Right ventricle myocardium inferior (tissue), 1 donor: ENCODE measurements at regions of chr15 and their contacts with region 1.

Region 1: DNA sequence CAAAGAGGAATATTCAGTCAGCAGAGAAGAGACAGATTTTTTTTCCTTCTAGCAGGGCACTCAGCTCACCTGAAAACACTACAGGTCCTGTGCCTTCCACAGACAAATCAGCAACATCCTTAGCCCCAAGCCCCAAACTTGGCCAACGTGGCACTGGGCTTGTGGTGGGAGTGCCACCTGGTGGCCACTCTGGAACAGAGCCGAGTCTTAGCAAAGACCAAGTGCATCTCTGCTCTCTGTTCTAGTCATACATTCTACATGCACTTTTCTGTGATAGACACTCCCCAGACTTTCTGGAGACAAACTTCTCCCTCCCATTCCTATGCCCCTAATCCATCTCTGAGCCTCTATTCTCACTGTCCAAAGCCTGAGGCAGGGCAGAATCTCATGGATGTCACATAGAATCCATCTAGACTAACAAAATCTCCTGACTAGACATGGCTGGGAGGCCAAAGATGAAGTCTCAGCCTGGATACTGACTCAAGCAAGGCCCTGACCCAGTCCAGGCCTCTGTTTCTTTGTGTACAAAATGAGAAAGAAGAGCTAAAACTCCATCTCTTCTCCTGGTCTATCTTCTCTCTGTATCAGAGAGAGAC is 5.1 kb upstream of the SEMA7A start:
- DNase-seq: peak; percentile 83
- ATAC-seq: peak; percentile 66

Region 2: DNA sequence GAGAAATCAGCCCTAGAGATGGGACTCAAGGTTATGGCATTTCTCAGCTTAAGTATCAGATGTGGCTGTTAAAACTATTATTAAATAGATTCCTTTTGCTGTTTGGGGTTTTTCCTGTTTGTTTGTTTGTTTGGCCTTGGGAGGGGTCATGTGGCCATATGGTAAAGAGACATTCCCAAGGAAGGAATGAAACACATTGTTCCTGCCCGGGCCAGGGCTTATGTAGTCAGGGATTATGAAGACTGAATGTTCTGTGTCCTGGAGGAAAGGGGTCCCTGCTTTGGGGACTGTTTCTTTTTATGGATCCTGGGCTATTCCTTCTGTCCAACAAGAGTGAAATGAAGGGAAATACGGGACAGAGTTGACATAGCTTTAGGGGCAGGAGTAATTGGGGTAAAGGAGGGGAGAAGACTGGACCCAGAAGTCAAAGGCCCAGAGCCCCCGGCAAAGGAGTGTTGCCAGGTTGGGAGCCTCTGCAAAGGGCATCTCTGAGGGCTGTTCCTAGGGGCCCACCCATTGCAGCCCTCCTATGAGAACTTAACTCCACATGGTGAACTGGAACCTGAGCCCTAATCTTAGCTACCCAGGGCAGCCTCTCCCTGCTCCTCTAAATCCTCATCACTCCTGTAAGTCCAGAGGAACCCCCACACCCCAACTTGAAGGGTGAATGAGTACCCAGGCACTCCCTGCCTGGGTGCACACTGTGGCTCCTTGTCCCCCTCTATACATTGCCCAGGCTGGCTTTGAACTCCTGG is 66.7 kb before region 1 on chr15:
- intact Hi-C with region 1: no loop called
- DNase-seq: no peak
- ATAC-seq: no peak

Region 3: GRCh38 chr15:74382004-74382816 is 56.6 kb before region 1 on chr15:
- intact Hi-C with region 1: loop called (anchors 1 kb)
- DNase-seq: peak; percentile 92
- ATAC-seq: peak; percentile 91

Region 4: GRCh38 chr15:74489518-74490338 is 50.9 kb after region 1 on chr15:
- intact Hi-C with region 1: loop called (anchors 5 kb)
- DNase-seq: no peak
- ATAC-seq: peak; percentile 65